ENCODE measurements at regions of chr2 and their contacts with region 1.

Region 1: DNA sequence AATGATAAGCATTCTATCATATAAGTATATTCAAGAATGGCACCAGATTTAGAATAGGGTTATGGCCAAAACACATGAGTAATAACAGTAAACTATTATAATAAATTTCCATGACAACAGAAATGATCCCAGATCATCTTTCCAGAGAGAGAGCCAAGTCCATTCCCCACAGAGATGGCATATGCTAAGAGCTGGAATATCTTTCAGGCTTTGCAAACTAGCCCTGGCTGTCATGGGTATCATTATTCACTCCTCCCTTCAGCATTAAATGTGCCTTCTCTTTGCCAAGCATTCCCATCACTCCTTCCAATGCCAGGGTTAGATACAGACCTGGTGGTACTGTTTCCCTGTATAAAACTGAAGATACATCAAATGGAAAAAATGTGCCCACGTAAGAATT is 10.9 kb downstream of the FEZ2 start:
- DNase-seq: no peak
- ATAC-seq: no peak
- H3K4me3 Mint-ChIP-seq: no peak overlapping the region
- H3K27ac Mint-ChIP-seq: no peak overlapping the region
- H3K4me1 Mint-ChIP-seq: peaks cover 5% of the 10 kb centered on the region
- H3K27me3 Mint-ChIP-seq: no peaks in the 10 kb centered on the region

Region 2: DNA sequence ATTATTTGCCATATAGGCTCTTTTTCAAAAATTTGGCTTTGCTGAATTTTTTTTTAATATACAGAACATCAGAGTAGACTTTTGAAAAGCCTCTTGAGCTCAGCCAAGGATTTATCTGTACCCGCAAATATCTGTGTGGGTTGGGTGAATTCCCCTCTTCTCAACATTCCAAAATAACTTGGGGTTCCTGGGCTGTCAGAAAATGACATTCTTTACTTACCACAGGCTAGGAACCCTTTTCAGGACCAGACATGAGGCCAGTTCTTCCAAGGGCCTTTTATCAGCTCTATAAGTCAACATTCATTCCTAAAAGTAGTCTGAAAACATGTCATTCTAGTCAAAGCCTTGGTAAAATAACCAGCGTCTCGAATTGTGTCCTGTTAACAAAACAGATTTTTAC is 39.7 kb after region 1 on chr2:
- CTCF ChIA-PET with region 1: no interaction called
- POLR2A ChIA-PET with region 1: no interaction called
- intact Hi-C with region 1: loop called in 1 of 2 experiments (anchors 2 kb)
- DNase-seq: no peak
- ATAC-seq: no peak
- H3K4me3 Mint-ChIP-seq: no peak overlapping the region
- H3K27ac Mint-ChIP-seq: no peak overlapping the region
- H3K4me1 Mint-ChIP-seq: no peaks in the 10 kb centered on the region
- H3K27me3 Mint-ChIP-seq: peaks cover 10% of the 10 kb centered on the region

Measured in activated CD4-positive, alpha-beta T cell treated with anti-CD3 and anti-CD28 coated beads for 36 hours (primary cell).